Activated T-helper 2 cell treated with anti-CD3 and anti-CD28 coated beads, Interferon-gamma antibody, Interleukin-2, Interleukin-4, amounts not matched to agents 10 μg/mL and 5 μg/mL and 100 μg/mL, durations not matched to agents 14 hours and 24 hours and 36 hours (primary cell): ENCODE measurements at regions of chr3 and their contacts with region 1.

Region 1: DNA sequence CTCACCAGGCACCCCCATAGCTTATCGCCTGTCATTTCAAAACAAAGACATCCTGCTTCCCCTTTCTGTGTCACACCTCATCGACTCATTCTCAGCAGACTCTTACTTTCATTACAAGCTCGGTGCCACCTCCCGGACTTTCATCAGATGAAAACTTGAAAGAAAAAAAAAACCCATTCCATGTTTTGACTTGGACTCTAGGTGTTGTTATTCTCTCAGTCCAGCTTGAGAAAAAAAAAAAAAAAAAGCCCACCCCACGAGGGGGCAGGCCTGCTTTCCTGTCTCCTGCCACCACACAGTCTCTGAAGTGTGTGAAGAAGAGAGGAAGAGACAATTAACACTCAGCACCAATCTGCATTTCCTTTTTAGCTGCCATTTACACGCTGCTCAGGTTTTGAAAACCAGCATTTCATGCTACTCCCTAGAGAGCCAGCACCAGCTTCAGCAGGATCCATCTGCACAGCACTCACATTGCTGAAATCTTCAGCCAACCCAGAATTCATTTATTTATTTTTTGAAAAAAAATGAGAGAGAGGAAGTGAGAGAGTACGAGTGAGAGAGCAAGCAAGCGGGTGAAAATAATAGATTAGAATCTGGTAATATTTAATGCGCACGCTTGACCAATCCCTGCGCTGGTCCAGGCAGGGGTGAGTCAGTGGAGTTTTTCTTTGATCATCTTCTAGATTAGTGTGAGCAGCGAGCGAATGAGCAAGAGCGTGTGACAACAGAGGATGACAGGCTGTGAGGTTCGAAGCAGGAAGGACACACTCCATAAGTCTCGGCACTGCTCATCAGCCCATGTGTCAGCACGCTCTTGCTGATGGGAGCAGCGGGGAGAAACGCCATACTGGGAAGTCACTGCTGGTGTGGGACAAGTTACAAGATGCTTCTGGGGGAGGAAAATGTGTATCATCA is 23.5 kb downstream of the ZNF80 start:
- DNase-seq: peak; percentile 74
- H3K4me3 Mint-ChIP-seq: no peak overlapping the region
- H3K27ac Mint-ChIP-seq: no peak overlapping the region
- H3K4me1 Mint-ChIP-seq: peaks cover 7% of the 10 kb centered on the region
- H3K27me3 Mint-ChIP-seq: no peaks in the 10 kb centered on the region

Region 2: DNA sequence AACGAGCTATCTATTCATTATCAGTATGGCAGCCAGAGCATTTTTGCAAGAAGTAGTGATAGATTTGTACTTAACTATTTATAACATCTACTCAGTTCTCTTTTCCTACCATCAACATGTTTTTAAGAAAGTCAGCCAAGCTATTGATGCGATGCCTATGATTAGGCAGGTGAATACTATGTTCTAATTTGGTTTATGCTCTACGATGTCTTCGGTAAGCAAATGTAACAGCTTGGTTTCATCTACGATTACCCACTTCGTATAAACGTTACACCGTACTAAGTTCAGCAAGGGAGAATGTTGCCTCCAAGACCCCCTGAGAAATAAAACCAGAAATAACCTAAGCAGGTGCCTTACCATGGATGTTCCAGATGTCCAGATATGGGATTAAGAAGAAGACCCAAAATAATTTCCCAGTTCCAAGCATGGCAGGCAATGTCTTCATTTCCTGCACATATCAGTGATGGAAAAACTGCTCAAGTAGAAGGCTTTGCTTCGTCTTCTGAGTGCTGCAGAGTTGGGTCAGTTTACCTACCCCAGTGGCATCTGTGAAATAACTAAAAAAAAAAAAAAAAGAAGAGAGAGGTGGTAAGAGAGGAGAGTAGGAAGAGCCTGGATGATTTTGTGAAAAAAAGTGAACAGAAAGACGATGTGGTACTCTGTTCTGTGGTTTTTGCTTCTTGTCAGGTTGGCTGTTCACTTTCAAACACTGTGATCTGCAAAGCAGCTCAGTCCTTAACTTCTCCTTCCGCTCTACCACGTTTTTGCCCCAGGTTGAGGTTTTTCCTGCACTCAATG is 1714.8 kb before region 1 on chr3 and contains the start of gene BTLA:
- intact Hi-C with region 1: loop called (anchors 10 kb)
- DNase-seq: no peak
- H3K4me3 Mint-ChIP-seq: peak within 1 kb of the TSS; percentile 98
- H3K27ac Mint-ChIP-seq: peak within 1 kb of the TSS; percentile 94
- H3K4me1 Mint-ChIP-seq: peaks cover 60% of the 10 kb centered on the region
- H3K27me3 Mint-ChIP-seq: no peaks in the 10 kb centered on the region
- total RNA-seq, gene BTLA: 31.1 and 35.7 TPM in 2 replicates

Region 3: DNA sequence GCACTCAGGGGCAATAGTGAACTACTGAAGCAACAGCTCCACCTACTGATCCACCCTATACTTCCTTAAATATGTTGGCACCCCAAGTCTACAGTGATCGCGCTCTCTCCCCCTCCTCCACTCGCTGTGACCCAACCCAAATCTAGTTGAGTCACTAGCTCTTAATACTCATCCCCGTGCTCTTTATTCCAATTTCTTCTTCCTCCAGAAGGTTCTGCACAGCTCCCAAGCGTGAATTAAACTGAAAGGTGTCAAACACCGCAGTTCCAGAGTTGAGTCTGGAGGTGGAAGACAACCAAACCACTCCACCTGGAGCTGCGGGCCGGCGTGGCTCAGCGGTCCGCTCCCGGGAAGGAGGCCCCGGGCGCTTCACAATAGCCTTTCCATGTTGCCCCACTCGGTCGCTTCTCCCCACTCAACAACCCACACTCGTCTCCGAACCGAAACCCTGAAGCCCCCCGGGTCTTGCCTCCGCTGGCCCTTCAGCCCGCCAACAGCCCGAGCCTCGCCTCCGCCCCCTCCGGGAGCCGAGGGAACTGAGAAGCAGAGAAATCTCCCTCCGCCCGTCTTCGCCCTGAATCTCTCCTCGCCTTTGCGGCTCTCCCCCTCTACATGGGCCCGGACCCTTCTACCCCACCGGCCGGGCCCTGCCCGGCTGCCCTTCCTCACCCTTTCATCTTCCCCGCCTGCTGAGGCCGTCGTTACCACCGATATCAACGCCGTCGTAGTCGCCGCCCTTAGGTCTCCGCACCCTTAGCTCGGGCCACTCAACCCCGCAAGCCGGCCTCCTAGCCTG is 468.4 kb before region 1 on chr3:
- intact Hi-C with region 1: loop called (anchors 1 kb)
- DNase-seq: peak; percentile 73
- H3K4me3 Mint-ChIP-seq: peak overlapping the region; percentile 96
- H3K27ac Mint-ChIP-seq: peak overlapping the region; percentile 100
- H3K4me1 Mint-ChIP-seq: peaks cover 64% of the 10 kb centered on the region
- H3K27me3 Mint-ChIP-seq: peaks cover 3% of the 10 kb centered on the region

Region 4: GRCh38 chr3:114152519-114153151 is 61.2 kb before region 1 on chr3:
- intact Hi-C with region 1: loop called (anchors 2 kb)
- DNase-seq: peak; percentile 63
- H3K4me3 Mint-ChIP-seq: peak overlapping the region; percentile 11
- H3K27ac Mint-ChIP-seq: no peak overlapping the region
- H3K4me1 Mint-ChIP-seq: peaks cover 3% of the 10 kb centered on the region
- H3K27me3 Mint-ChIP-seq: peaks cover 2% of the 10 kb centered on the region

Region 5: GRCh38 chr3:114176890-114177289 is 37.0 kb before region 1 on chr3:
- intact Hi-C with region 1: no loop called
- DNase-seq: no peak
- H3K4me3 Mint-ChIP-seq: no peak overlapping the region
- H3K27ac Mint-ChIP-seq: no peak overlapping the region
- H3K4me1 Mint-ChIP-seq: peaks cover 3% of the 10 kb centered on the region
- H3K27me3 Mint-ChIP-seq: peaks cover 8% of the 10 kb centered on the region

Region 6: GRCh38 chr3:114290911-114291901 is 77.3 kb after region 1 on chr3:
- intact Hi-C with region 1: loop called (anchors 2 kb)
- DNase-seq: peak; percentile 69
- H3K4me3 Mint-ChIP-seq: peak overlapping the region; percentile 13
- H3K27ac Mint-ChIP-seq: peak overlapping the region; percentile 84
- H3K4me1 Mint-ChIP-seq: peaks cover 31% of the 10 kb centered on the region
- H3K27me3 Mint-ChIP-seq: no peaks in the 10 kb centered on the region

Region 7: GRCh38 chr3:114418724-114419543 is 205.1 kb after region 1 on chr3:
- intact Hi-C with region 1: loop called (anchors 1 kb)
- DNase-seq: no peak
- H3K4me3 Mint-ChIP-seq: no peak overlapping the region
- H3K27ac Mint-ChIP-seq: peak overlapping the region; percentile 84
- H3K4me1 Mint-ChIP-seq: peaks cover 29% of the 10 kb centered on the region
- H3K27me3 Mint-ChIP-seq: no peaks in the 10 kb centered on the region

Region 8: GRCh38 chr3:115790759-115791158 is 1576.9 kb after region 1 on chr3:
- intact Hi-C with region 1: loop called (anchors 10 kb)
- DNase-seq: peak; percentile 17
- H3K4me3 Mint-ChIP-seq: peak overlapping the region; percentile 34
- H3K27ac Mint-ChIP-seq: peak overlapping the region; percentile 77
- H3K4me1 Mint-ChIP-seq: peaks cover 35% of the 10 kb centered on the region
- H3K27me3 Mint-ChIP-seq: peaks cover 5% of the 10 kb centered on the region